PC-9 (cell line): ENCODE measurements at regions of chr10 and their contacts with region 1.

Region 1: GRCh38 chr10:77289027-77289501 is 348.5 kb downstream of the KCNMA1 start:
- DNase-seq: no peak
- H3K4me3 ChIP-seq: no peak overlapping the region
- H3K27ac ChIP-seq: no peak overlapping the region
- H3K4me1 ChIP-seq: peaks cover 33% of the 10 kb centered on the region
- H3K27me3 ChIP-seq: no peaks in the 10 kb centered on the region
- CTCF ChIP-seq: no peak

Region 2: DNA sequence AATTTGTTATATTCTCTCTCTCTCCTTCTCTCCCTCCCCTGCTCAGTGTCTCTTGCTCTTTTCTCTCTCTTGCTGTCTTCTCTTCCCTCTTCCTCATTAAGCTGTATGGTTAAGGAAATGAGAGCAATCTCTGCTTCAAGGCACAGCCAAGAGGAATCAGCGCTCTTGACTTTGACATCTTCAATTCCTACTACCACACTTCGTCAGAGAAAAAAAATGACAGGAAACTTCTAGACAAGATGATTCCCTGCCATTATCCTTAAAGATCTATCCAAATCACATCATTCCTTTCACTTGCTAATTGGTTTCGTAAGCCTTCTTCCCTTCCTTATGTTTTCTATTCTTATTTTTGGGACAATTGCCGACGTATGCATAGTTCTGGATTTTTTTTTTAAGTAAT is 76.4 kb before region 1 on chr10:
- CTCF ChIA-PET with region 1: no interaction called
- POLR2A ChIA-PET with region 1: interaction called, 10 read pairs
- intact Hi-C with region 1: no loop called
- DNase-seq: no peak
- H3K4me3 ChIP-seq: no peak overlapping the region
- H3K27ac ChIP-seq: no peak overlapping the region
- H3K4me1 ChIP-seq: no peaks in the 10 kb centered on the region
- H3K27me3 ChIP-seq: peaks cover 4% of the 10 kb centered on the region; the same call in 1 of the 2 replicates
- CTCF ChIP-seq: no peak